Astrocyte of the cerebellum (primary cell): ENCODE measurements at regions of chrX and their contacts with region 1.

Region 1: DNA sequence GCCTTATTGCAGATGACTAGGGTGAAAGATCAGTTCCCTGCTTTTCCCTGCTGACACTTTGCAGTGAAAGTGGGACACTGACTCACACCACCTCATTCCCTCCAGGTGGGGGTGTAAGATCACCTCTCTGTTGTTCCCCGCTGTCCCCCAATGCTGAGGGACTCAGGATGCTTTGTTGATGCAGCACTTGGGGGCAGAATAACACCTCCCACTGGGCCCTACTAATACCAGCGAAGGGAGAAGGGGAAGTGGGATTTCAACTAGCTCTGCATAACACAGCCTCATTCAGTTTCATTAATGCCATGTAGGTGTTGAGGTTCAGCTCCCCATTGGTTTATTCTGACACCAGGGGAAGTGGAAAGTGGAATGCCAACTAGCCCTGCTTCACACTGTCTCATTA is 43.6 kb upstream of the IL1RAPL2 start:
- DNase-seq: no peak
- H3K4me3 ChIP-seq: no peak overlapping the region
- CTCF ChIP-seq: no peak

Region 2: DNA sequence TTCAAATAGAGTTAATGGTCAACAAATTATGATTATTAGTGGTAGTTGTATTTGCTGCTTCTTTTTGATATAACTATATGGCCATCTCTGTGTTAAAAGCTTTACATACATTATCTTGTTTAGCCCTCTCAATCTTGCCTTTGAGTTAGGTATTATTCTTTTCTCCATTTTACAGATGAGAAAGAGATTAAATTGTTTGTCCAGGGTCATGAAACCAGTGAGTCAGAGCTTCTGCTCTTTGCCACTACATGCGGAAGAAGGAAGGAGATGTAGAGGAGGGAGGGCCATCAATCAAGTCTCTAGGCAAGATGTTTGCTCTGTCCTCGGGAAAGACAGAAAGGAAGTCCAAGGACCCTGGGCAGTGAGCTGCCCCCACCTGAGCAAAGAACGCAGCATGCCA is 90.1 kb before region 1 on chrX:
- in situ Hi-C with region 1: no loop called
- DNase-seq: no peak
- H3K4me3 ChIP-seq: no peak overlapping the region
- CTCF ChIP-seq: no peak

Region 3: DNA sequence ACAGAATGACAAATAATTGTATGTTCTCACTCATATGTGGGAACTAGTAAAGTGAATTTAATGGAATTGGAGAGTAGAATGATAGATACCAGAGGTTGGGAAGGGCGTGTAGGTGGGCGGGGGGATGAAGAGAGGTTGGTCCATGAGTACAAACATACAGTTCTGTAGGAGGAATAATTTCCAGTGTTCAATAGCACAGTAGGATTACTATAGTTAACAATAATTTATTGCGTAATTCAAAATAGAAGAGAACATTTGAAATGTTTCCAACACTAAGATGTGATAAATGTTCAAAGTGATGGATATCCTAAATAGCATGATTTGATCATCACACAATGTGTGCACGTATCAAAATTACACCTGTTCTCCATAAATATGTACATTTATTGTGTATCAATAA is 62.6 kb before region 1 on chrX:
- in situ Hi-C with region 1: no loop called
- DNase-seq: no peak
- H3K4me3 ChIP-seq: no peak overlapping the region
- CTCF ChIP-seq: no peak

Region 4: GRCh38 chrX:104564335-104564734 is 41.9 kb after region 1 on chrX:
- in situ Hi-C with region 1: loop called (anchors 5 kb)
- DNase-seq: no peak
- H3K4me3 ChIP-seq: no peak overlapping the region
- CTCF ChIP-seq: no peak

Region 5: GRCh38 chrX:104647084-104647483 is 124.7 kb after region 1 on chrX:
- in situ Hi-C with region 1: no loop called
- DNase-seq: no peak
- H3K4me3 ChIP-seq: no peak overlapping the region
- CTCF ChIP-seq: no peak